ENCODE measurements at regions of chr18 and their contacts with region 1.

Region 1: GRCh38 chr18:22563098-22563707 is 145.5 kb upstream of the CTAGE1 start:
- DNase-seq: peak; percentile 85
- H3K4me3 ChIP-seq: peak overlapping the region; percentile 12 to 23 (median 19)
- H3K27ac ChIP-seq: peak overlapping the region; percentile 41
- H3K4me1 ChIP-seq: peaks cover 31% of the 10 kb centered on the region
- H3K27me3 ChIP-seq: no peaks in the 10 kb centered on the region
- CTCF ChIP-seq: peak; percentile 89

Region 2: GRCh38 chr18:21897811-21898210 is 665.4 kb before region 1 on chr18:
- CTCF ChIA-PET with region 1: no interaction called
- dilution Hi-C with region 1: no loop called
- in situ Hi-C with region 1: loop called in 1 of 2 experiments (anchors 10 kb)
- intact Hi-C with region 1: loop called (anchors 1 kb)
- DNase-seq: peak; percentile 39
- H3K4me3 ChIP-seq: no peak overlapping the region
- H3K27ac ChIP-seq: no peak overlapping the region
- H3K4me1 ChIP-seq: no peaks in the 10 kb centered on the region
- H3K27me3 ChIP-seq: no peaks in the 10 kb centered on the region
- CTCF ChIP-seq: peak; percentile 86 to 90

Region 3: DNA sequence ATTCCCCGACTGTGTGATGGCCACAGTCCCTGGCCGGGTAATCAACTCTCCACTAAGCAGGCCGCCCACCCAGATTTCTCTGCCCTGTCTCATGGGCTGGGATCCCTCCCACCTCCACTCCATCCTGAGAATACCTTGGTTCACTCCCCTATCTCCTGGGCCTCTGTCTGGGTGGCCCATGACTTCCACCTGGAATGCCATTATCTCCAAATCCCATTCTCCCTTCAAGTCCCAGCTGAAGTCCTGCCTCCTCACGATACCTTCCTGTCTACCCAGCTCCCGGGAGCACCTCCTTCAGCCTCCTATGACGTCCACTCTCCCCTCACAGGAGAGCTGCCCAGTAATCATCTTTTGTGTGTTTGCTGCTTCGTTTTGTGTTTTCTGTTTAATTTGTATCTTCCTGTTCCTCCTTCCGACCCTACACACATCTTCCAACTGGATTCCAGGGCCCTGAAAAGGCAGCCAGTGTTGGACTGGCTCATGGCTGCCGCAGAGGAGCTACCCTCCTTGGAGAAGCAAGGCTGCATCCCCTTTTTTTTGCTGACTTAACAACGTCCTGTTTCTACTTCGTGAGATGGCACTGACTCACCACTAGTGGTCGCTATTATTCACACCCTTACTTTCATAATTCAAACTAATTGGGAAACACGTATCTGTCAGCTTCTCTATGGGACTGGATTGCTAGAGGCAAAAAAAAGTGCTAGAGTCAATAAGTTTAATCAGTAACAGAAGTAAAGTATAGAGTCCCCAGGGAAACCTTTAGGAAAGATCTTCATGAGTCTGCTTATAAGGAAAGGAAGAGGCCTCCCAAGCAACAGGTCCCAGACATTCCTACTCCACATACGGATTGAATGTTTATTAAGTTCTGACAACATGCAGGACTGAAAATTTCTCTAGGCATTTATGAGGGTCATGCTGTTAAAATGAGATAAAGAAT is 565.7 kb before region 1 on chr18:
- CTCF ChIA-PET with region 1: interaction called, 5 read pairs
- dilution Hi-C with region 1: no loop called
- in situ Hi-C with region 1: no loop called
- intact Hi-C with region 1: loop called (anchors 1 kb)
- DNase-seq: peak; percentile 32
- H3K4me3 ChIP-seq: no peak overlapping the region
- H3K27ac ChIP-seq: no peak overlapping the region
- H3K4me1 ChIP-seq: no peaks in the 10 kb centered on the region
- H3K27me3 ChIP-seq: no peaks in the 10 kb centered on the region
- CTCF ChIP-seq: peak; percentile 82 to 96

Region 4: DNA sequence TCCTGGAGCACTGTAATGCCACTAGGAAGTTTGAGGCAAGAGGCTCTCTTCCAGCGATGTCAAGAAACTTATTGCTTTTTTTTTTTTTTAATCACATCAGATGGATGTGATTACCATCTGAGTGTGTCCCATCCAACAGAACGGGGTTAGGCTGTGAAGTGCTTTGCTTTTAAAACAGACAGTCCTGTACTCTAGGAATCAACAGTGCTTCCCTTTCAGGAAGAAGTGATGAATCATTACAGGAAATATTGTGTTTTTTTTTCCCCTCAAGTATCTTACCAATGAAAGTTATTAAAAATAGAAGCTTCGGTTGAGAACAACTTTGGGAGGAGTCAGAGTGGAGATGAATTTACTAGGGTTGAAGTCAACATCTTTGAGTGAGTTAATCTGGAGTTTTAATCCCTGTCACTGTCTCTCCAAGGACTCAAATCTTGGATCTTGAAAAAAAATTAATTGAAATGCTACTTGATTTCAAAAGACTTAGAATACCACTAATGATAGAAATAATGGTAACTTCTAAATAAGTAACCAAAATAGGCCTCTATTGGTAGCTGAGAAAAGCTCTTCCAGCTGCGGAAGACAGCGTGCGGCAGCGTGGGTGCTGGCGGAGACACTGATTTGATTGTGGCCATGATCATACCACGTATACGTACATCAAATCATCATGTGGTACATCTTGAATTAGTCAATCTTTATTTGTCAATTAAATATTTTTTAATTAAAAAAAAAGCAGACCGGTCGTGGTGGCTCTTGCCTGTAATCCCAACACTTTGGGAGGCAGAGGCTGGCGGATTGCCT is 348.3 kb before region 1 on chr18:
- CTCF ChIA-PET with region 1: no interaction called
- dilution Hi-C with region 1: loop called (anchors 5 kb)
- in situ Hi-C with region 1: no loop called
- intact Hi-C with region 1: loop called (anchors 10 kb)
- DNase-seq: peak; percentile 49
- H3K4me3 ChIP-seq: no peak overlapping the region
- H3K27ac ChIP-seq: peak overlapping the region; percentile 27
- H3K4me1 ChIP-seq: peaks cover 20% of the 10 kb centered on the region
- H3K27me3 ChIP-seq: no peaks in the 10 kb centered on the region
- CTCF ChIP-seq: no peak

Region 5: GRCh38 chr18:22378672-22379282 is 184.4 kb before region 1 on chr18:
- CTCF ChIA-PET with region 1: no interaction called
- dilution Hi-C with region 1: no loop called
- in situ Hi-C with region 1: loop called in 1 of 2 experiments (anchors 25 kb)
- intact Hi-C with region 1: no loop called
- DNase-seq: peak; percentile 43
- H3K4me3 ChIP-seq: no peak overlapping the region
- H3K27ac ChIP-seq: no peak overlapping the region
- H3K4me1 ChIP-seq: no peaks in the 10 kb centered on the region
- H3K27me3 ChIP-seq: no peaks in the 10 kb centered on the region
- CTCF ChIP-seq: peak; percentile 70 to 73

Region 6: GRCh38 chr18:22471546-22472131 is 91.6 kb before region 1 on chr18:
- CTCF ChIA-PET with region 1: no interaction called
- dilution Hi-C with region 1: loop called (anchors 5 kb)
- in situ Hi-C with region 1: loop called in 1 of 2 experiments (anchors 10 kb)
- intact Hi-C with region 1: loop called (anchors 5 kb)
- DNase-seq: no peak
- H3K4me3 ChIP-seq: no peak overlapping the region
- H3K27ac ChIP-seq: no peak overlapping the region
- H3K4me1 ChIP-seq: peaks cover 11% of the 10 kb centered on the region
- H3K27me3 ChIP-seq: no peaks in the 10 kb centered on the region
- CTCF ChIP-seq: no peak

Region 7: DNA sequence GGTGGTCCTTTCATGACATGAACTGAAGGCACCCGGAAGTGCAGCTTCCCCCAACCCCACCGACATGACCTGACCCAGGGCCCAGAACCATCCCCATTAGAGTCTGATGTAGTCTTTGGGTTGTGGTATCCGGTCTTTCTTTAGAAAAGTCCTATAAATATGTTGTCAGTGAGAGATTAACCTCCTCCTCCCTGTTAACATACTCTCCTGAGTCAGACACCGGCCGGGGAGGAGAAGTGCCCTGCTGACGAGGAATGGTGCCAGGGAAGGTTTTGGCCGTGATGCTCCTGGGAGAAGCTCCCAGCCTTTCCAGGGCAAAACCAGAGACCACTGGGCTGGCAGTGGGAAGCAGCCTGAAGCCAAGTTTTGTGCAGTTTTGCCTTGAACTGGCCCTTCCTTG is 1235.0 kb after region 1 on chr18:
- CTCF ChIA-PET with region 1: no interaction called
- dilution Hi-C with region 1: no loop called
- in situ Hi-C with region 1: no loop called
- intact Hi-C with region 1: no loop called
- DNase-seq: no peak
- H3K4me3 ChIP-seq: no peak overlapping the region
- H3K27ac ChIP-seq: no peak overlapping the region
- H3K4me1 ChIP-seq: no peaks in the 10 kb centered on the region
- H3K27me3 ChIP-seq: no peaks in the 10 kb centered on the region
- CTCF ChIP-seq: no peak

Measured in mammary epithelial cell (primary cell).